HCT116 (cell line): ENCODE measurements at regions of chr12 and their contacts with region 1.

Region 1: GRCh38 chr12:69157023-69157655 is 82.2 kb upstream of the CPSF6 start:
- DNase-seq: peak; percentile 69
- ATAC-seq: peak; percentile 96
- H3K4me3 ChIP-seq: peak overlapping the region in 1 of 2 experiments; percentile 32; a peak in 2 of 4 replicates
- H3K27ac ChIP-seq: no peak overlapping the region
- H3K4me1 ChIP-seq: peaks cover 3 to 4% of the 10 kb centered on the region in 2 experiments; a peak in 3 of 4 replicates
- H3K27me3 ChIP-seq: no peaks in the 10 kb centered on the region
- CTCF ChIP-seq: peak; percentile 72 to 99 (median 95)
- POLR2A ChIP-seq: no peak
- RAD21 ChIP-seq: peak; percentile 64

Region 2: DNA sequence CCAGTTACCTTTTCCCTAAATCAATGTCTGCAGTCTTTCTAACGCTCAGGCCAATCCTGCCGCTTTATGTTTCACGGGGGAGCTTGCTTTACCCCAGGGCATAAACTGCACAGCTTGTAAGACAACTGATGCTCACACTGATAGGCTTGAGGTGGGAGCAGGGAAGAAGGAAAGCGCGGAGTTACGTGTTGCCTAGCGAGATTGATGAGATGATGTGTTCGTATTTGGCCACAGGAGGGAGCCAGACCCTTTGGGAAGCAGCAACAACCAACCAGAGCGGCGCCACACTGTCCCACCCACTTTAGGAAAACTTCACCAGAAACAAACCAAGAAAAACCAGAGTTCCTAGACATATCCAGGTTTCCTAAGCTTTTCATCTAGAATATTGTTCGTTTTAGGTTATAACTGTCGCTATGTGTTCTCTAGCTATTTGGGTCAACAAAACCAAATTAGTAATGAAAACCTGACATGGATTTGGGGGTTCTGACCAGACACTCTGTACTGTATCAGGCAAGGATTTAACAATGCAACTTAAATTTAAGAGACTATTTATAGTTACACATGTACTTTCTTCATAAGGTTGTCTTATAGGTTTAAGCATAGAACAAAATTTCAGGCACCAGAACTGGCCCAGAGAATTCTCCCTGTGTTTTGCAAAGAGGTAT is 933.9 kb before region 1 on chr12:
- CTCF ChIA-PET with region 1: no interaction called
- POLR2A ChIA-PET with region 1: no interaction called
- RAD21 ChIA-PET with region 1: no interaction called
- intact Hi-C with region 1: loop called (anchors 5 kb)
- DNase-seq: peak; percentile 76
- ATAC-seq: peak; percentile 100
- H3K4me3 ChIP-seq: peak overlapping the region in 1 of 2 experiments; percentile 34; a peak in 2 of 4 replicates
- H3K27ac ChIP-seq: no peak overlapping the region
- H3K4me1 ChIP-seq: peaks cover 0 to 8% of the 10 kb centered on the region in 2 experiments; a peak in 1 of 4 replicates
- H3K27me3 ChIP-seq: no peaks in the 10 kb centered on the region
- CTCF ChIP-seq: peak; percentile 71 to 91 (median 81)
- POLR2A ChIP-seq: no peak
- RAD21 ChIP-seq: peak; percentile 93

Region 3: GRCh38 chr12:68871921-68872320 is 285.2 kb before region 1 on chr12:
- CTCF ChIA-PET with region 1: no interaction called
- POLR2A ChIA-PET with region 1: no interaction called
- RAD21 ChIA-PET with region 1: no interaction called
- intact Hi-C with region 1: loop called (anchors 5 kb)
- DNase-seq: peak; percentile 19
- ATAC-seq: peak; percentile 71
- H3K4me3 ChIP-seq: no peak overlapping the region
- H3K27ac ChIP-seq: no peak overlapping the region
- H3K4me1 ChIP-seq: no peaks in the 10 kb centered on the region
- H3K27me3 ChIP-seq: no peaks in the 10 kb centered on the region
- CTCF ChIP-seq: peak; percentile 58 to 64 (median 58)
- POLR2A ChIP-seq: no peak
- RAD21 ChIP-seq: peak; percentile 70

Region 4: DNA sequence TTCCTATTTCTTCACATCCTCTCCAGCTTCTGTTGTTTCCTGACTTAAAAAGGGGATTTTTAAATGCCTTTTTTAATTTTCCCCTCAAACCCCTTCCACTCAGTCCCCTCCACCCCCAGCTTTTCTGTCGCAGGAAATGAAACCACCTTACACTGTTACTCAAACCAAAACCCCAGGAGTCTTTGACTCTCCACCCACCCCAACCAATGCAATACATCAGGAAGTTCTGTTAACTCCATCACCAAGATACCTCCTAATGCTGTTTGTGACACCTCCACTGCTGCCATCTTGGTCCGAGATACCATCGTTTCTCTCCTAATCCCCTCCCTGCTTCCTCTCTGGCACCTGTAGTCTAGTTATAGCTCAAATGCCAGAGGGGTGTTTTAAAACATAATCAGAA is 198.8 kb before region 1 on chr12:
- CTCF ChIA-PET with region 1: no interaction called
- POLR2A ChIA-PET with region 1: no interaction called
- RAD21 ChIA-PET with region 1: no interaction called
- intact Hi-C with region 1: no loop called
- DNase-seq: no peak
- ATAC-seq: no peak
- H3K4me3 ChIP-seq: no peak overlapping the region
- H3K27ac ChIP-seq: no peak overlapping the region
- H3K4me1 ChIP-seq: no peaks in the 10 kb centered on the region; a peak in 1 of 4 replicates
- H3K27me3 ChIP-seq: no peaks in the 10 kb centered on the region
- CTCF ChIP-seq: no peak
- POLR2A ChIP-seq: no peak
- RAD21 ChIP-seq: no peak

Region 5: DNA sequence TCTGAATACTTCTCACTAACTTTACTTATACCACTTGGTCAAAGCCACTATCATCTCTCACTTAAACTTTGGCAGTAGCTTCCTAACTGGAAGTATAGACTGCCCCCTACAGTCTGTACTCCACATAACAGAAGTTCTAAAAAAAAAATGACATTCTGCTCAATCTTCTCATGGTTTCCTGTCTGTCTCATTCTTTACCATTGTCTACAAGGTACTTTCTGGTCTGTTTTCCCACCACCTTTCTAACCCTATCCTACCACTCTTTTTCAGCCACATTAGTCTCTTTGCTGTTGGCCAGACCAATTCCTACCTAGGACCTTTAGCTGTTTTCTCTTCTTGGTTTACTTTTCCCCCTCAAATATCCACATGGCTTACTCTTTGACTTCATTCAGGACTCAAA is 96.9 kb after region 1 on chr12:
- CTCF ChIA-PET with region 1: interaction called, 9 read pairs
- POLR2A ChIA-PET with region 1: no interaction called
- RAD21 ChIA-PET with region 1: no interaction called
- intact Hi-C with region 1: loop called (anchors 2 kb)
- DNase-seq: peak; percentile 33
- ATAC-seq: peak; percentile 46; the same call in 1 of the 2 replicates
- H3K4me3 ChIP-seq: no peak overlapping the region
- H3K27ac ChIP-seq: no peak overlapping the region
- H3K4me1 ChIP-seq: no peaks in the 10 kb centered on the region
- H3K27me3 ChIP-seq: no peaks in the 10 kb centered on the region
- CTCF ChIP-seq: peak; percentile 47 to 71 (median 71); a peak in 5 of 6 replicates
- POLR2A ChIP-seq: no peak
- RAD21 ChIP-seq: peak; percentile 61

Region 6: DNA sequence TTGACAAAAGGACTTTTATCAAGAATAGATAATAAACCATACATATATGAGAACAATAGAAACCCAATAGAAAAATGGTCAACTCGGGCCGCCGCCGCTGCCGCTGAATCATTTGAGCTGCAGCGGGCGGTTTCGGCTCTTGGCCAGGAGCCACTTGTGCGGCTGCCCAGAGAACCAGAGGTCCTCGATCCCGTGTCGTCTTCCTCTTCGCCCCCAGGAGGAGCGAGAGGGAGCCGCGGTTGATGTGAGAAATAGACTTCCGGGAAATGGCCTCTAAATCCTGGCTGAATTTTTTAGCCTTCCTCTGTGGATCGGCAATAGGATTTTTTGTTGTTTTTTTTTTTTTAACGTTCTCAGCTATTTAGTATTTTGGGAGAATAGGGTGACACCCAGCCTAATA is 127.0 kb after region 1 on chr12:
- CTCF ChIA-PET with region 1: no interaction called
- POLR2A ChIA-PET with region 1: no interaction called
- RAD21 ChIA-PET with region 1: no interaction called
- intact Hi-C with region 1: loop called (anchors 10 kb)
- DNase-seq: peak; percentile 52
- ATAC-seq: peak; percentile 92
- H3K4me3 ChIP-seq: peak overlapping the region in 1 of 2 experiments; percentile 13; a peak in 1 of 4 replicates
- H3K27ac ChIP-seq: no peak overlapping the region
- H3K4me1 ChIP-seq: peaks cover 5 to 15% of the 10 kb centered on the region in 2 experiments; a peak in 3 of 4 replicates
- H3K27me3 ChIP-seq: no peaks in the 10 kb centered on the region; the same call in 1 of the 2 replicates
- CTCF ChIP-seq: peak in 1 of 3 experiments; percentile 36; a peak in 2 of 6 replicates
- POLR2A ChIP-seq: no peak
- RAD21 ChIP-seq: no peak

Region 7: GRCh38 chr12:69359531-69360347 is 202.6 kb after region 1 on chr12 and contains the start of gene YEATS4:
- CTCF ChIA-PET with region 1: interaction called, 3 read pairs
- POLR2A ChIA-PET with region 1: no interaction called
- RAD21 ChIA-PET with region 1: no interaction called
- intact Hi-C with region 1: loop called (anchors 10 kb)
- DNase-seq: peak; percentile 90
- ATAC-seq: peak; percentile 89
- H3K4me3 ChIP-seq: peak within 1 kb of the TSS; percentile 56 to 63
- H3K27ac ChIP-seq: peak within 1 kb of the TSS; percentile 99
- H3K4me1 ChIP-seq: peaks cover 5 to 24% of the 10 kb centered on the region in 2 experiments; a peak in 3 of 4 replicates
- H3K27me3 ChIP-seq: no peaks in the 10 kb centered on the region
- CTCF ChIP-seq: no peak
- POLR2A ChIP-seq: peak; percentile 24
- RAD21 ChIP-seq: no peak
- total RNA-seq, gene YEATS4: 32.0 TPM